Activated CD4-positive, alpha-beta T cell treated with anti-CD3 and anti-CD28 coated beads, Interleukin-2, amount 10 ng/mL, durations not matched to agents 24 days and 14 days (primary cell): ENCODE measurements at regions of chr6 and their contacts with region 1.

Region 1: GRCh38 chr6:4941782-4942672 is 61.8 kb downstream of the RPP40 start:
- DNase-seq: peak; percentile 75
- H3K4me3 Mint-ChIP-seq: peak overlapping the region; percentile 0
- H3K27ac Mint-ChIP-seq: peak overlapping the region; percentile 26
- H3K4me1 Mint-ChIP-seq: peaks cover 32% of the 10 kb centered on the region
- H3K27me3 Mint-ChIP-seq: no peaks in the 10 kb centered on the region

Region 2: GRCh38 chr6:4637691-4638433 is 304.2 kb before region 1 on chr6:
- intact Hi-C with region 1: loop called (anchors 5 kb)
- DNase-seq: peak; percentile 65
- H3K4me3 Mint-ChIP-seq: no peak overlapping the region
- H3K27ac Mint-ChIP-seq: peak overlapping the region; percentile 60
- H3K4me1 Mint-ChIP-seq: peaks cover 9% of the 10 kb centered on the region
- H3K27me3 Mint-ChIP-seq: peaks cover 6% of the 10 kb centered on the region

Region 3: DNA sequence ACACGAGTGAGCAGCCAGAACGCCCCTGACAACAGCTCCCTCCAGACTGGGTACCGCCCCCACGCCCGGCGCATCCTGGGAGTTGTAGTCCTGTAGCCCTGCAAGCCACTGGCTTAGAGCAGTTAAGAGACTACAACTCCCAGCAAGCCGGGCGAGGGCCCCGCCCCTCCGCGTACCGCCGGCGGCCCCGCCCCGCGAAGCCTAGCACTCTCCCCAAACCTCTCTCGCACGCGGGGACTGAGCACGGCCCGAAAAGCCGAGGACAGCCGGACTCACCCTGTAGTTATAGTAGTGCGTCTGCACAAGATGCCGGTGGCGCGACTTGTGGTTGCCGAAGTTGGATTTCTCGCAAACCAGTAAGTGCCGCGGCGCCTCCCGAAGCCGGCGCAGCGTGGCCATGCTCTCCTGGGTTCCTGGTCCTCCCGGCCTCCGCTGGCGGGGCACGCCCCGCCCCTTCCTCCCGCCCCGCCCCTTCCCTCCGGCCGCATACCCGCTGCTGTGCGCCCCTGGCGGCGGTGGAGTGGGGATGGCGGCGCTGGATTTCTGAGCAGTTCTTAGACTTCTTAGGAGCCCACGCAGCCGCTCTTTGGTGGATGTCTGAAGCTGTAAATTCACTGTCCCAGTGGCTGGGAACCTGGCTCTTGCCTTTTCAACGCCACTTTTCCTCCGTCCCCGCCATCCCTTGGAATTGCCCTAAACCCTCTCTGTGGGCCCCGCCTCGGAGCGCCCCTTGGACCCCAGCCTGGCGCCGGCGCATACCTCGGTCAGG is 61.8 kb after region 1 on chr6 and contains the start of gene RPP40:
- intact Hi-C with region 1: loop called (anchors 5 kb)
- DNase-seq: peak; percentile 100
- H3K4me3 Mint-ChIP-seq: peak within 1 kb of the TSS; percentile 95
- H3K27ac Mint-ChIP-seq: peak within 1 kb of the TSS; percentile 98
- H3K4me1 Mint-ChIP-seq: peaks cover 12% of the 10 kb centered on the region
- H3K27me3 Mint-ChIP-seq: no peaks in the 10 kb centered on the region
- total RNA-seq, gene RPP40: 14.2 and 16.4 TPM in 2 replicates